Calu3 (cell line): ENCODE measurements at regions of chr18 and their contacts with region 1.

Region 1: GRCh38 chr18:7789856-7790552 is 222.9 kb downstream of the PTPRM start:
- DNase-seq: peak; percentile 49
- H3K4me3 Mint-ChIP-seq: no peak overlapping the region
- H3K27ac Mint-ChIP-seq: no peak overlapping the region
- H3K4me1 Mint-ChIP-seq: no peaks in the 10 kb centered on the region
- H3K27me3 Mint-ChIP-seq: no peaks in the 10 kb centered on the region
- CTCF ChIP-seq: peak; percentile 63

Region 2: DNA sequence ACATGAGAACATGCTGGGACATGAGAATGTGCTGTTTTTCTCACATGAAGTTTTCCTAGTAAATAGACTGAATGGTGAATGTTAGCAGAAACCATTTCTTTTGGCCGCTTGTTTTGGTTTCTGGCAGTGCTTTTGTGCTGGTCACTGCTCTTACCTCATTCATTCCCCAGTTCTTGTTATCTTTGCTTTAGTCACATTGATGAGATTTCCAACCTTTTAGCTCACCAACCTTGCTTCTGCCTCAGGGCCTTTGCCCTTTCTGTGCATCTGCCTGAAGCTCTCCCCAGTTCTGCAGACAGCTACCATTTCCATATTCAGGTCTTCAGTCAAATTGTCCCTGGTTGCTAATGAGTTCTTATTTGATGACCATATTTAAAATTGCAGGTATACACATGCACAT is 131.3 kb before region 1 on chr18:
- CTCF ChIA-PET with region 1: no interaction called
- intact Hi-C with region 1: no loop called
- DNase-seq: no peak
- H3K4me3 Mint-ChIP-seq: no peak overlapping the region
- H3K27ac Mint-ChIP-seq: no peak overlapping the region
- H3K4me1 Mint-ChIP-seq: no peaks in the 10 kb centered on the region
- H3K27me3 Mint-ChIP-seq: no peaks in the 10 kb centered on the region
- CTCF ChIP-seq: no peak

Region 3: GRCh38 chr18:7872569-7872968 is 82.6 kb after region 1 on chr18:
- CTCF ChIA-PET with region 1: interaction called, 15 read pairs
- intact Hi-C with region 1: loop called (anchors 2 kb)
- DNase-seq: peak; percentile 37
- H3K4me3 Mint-ChIP-seq: peak overlapping the region; percentile 26
- H3K27ac Mint-ChIP-seq: peak overlapping the region; percentile 85
- H3K4me1 Mint-ChIP-seq: peaks cover 27% of the 10 kb centered on the region
- H3K27me3 Mint-ChIP-seq: no peaks in the 10 kb centered on the region
- CTCF ChIP-seq: no peak

Region 4: GRCh38 chr18:8389391-8390340 is 599.7 kb after region 1 on chr18:
- CTCF ChIA-PET with region 1: interaction called, 3 read pairs
- intact Hi-C with region 1: loop called (anchors 2 kb)
- DNase-seq: peak; percentile 80
- H3K4me3 Mint-ChIP-seq: no peak overlapping the region
- H3K27ac Mint-ChIP-seq: no peak overlapping the region
- H3K4me1 Mint-ChIP-seq: no peaks in the 10 kb centered on the region
- H3K27me3 Mint-ChIP-seq: no peaks in the 10 kb centered on the region
- CTCF ChIP-seq: peak; percentile 88